Activated CD8-positive, alpha-beta T cell treated with anti-CD3 and anti-CD28 coated beads, Interleukin-2, amount 10 ng/mL, durations not matched to agents 7 days and 5 days (primary cell): ENCODE measurements at regions of chr19 and their contacts with region 1.

Region 1: GRCh38 chr19:11924886-11925650 is at the start of gene ZNF700:
- DNase-seq: peak; percentile 97
- ATAC-seq: peak; percentile 91
- H3K4me3 Mint-ChIP-seq: peak within 1 kb of the TSS; percentile 94
- H3K27ac Mint-ChIP-seq: peak within 1 kb of the TSS; percentile 97
- H3K4me1 Mint-ChIP-seq: peaks cover 38% of the 10 kb centered on the region
- H3K27me3 Mint-ChIP-seq: no peaks in the 10 kb centered on the region
- total RNA-seq, gene ZNF700: 22.7 to 25.7 TPM

Region 2: GRCh38 chr19:11881151-11881800 is 43.8 kb before region 1 on chr19:
- CTCF ChIA-PET with region 1: interaction called, 49 read pairs
- POLR2A ChIA-PET with region 1: interaction called, 17 read pairs
- DNase-seq: peak; percentile 77
- ATAC-seq: peak; percentile 82
- H3K4me3 Mint-ChIP-seq: no peak overlapping the region
- H3K27ac Mint-ChIP-seq: no peak overlapping the region
- H3K4me1 Mint-ChIP-seq: no peaks in the 10 kb centered on the region
- H3K27me3 Mint-ChIP-seq: peaks cover 6% of the 10 kb centered on the region

Region 3: GRCh38 chr19:11949201-11949600 is 24.1 kb after region 1 on chr19:
- CTCF ChIA-PET with region 1: interaction called, 10 read pairs
- POLR2A ChIA-PET with region 1: interaction called, 4 read pairs
- DNase-seq: no peak
- ATAC-seq: no peak
- H3K4me3 Mint-ChIP-seq: no peak overlapping the region
- H3K27ac Mint-ChIP-seq: peak overlapping the region; percentile 1
- H3K4me1 Mint-ChIP-seq: no peaks in the 10 kb centered on the region
- H3K27me3 Mint-ChIP-seq: no peaks in the 10 kb centered on the region

Region 4: DNA sequence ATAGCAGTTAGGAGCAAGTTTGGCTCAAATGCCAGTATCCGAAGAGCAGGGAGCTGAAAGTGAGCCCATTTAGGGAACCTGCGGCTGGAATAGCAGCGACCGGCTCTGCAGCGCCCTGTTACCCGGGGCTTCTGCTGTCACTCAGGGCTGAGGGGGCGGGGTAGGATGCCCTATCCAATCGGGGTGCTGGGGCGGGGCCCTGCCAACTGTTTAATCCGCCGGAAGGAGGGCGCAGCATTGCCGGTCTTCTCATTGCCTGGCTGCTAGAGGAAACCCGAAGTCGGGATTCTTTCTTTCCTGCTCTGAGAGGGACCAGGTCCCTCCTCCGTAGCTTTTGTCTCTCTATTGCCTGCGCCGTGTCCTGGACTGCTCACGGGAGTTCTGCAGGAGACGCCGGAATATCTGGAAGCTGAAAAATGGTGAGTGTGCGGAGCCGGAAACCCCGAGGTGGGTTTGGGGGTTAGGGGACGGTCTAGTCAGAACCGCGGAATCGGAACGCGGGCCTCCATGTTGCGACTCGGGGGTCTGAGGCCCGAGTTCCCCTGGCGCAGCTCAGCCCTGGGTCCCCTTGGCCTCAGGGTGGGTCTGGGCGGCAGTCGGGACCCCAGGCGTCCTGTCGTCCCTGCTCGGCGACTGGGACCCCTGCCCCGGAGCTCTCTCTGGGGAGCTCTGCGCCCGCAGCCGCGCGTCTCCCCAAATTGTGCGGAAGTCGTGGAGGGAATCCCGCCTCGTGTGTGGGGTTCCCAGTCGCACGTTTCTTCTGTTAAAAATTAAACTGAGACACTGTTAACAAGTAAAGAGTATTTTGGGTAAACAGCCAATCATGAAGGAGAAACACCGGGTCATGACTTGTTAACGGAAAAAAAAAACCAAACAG is 62.6 kb after region 1 on chr19:
- CTCF ChIA-PET with region 1: interaction called, 115 read pairs
- POLR2A ChIA-PET with region 1: interaction called, 53 read pairs
- DNase-seq: peak; percentile 97
- ATAC-seq: peak; percentile 96
- H3K4me3 Mint-ChIP-seq: peak overlapping the region; percentile 99
- H3K27ac Mint-ChIP-seq: peak overlapping the region; percentile 98
- H3K4me1 Mint-ChIP-seq: peaks cover 27% of the 10 kb centered on the region
- H3K27me3 Mint-ChIP-seq: no peaks in the 10 kb centered on the region

Region 5: DNA sequence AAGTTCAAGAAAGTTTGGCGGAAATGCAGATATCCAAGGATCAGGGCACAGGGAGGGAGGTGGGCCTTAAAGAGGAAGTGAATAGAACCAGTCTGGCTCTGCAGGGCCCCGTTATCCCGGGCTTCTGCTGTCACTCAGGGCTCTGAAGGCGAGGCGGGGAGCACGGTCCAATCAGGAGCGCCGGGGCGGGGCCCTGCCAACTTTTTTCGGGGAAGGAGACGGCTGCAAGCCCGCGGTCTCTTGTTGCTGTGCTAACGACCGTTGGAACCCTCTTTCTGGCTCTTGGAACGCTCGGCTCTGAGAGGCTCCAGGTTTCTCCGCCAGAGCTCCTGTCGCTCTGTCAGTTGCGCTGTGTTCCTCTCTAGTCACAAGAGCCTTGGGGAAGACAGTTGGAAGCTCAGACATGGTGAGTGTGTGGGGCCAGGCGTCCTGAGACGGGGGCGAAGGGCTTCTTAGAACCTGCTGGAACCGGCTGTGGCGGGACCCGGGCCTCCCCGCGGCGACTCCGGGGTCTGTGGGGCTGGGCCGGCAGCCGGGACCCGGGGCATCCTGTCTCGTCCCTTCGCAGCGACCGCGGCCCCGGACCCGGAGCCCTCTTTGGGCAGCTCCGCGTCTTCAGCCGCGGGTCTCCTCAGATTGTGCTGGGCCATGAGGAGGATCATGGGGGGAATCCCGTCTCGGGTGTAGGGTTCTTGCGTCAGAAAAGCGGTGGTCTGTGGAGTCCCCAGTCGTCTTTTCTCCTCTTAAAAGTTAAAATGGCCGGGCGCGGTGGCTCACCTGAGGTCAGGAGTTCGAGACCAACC is 167.2 kb after region 1 on chr19:
- CTCF ChIA-PET with region 1: interaction called, 25 read pairs
- POLR2A ChIA-PET with region 1: interaction called, 6 read pairs
- DNase-seq: peak; percentile 84
- ATAC-seq: peak; percentile 94
- H3K4me3 Mint-ChIP-seq: peak overlapping the region; percentile 84
- H3K27ac Mint-ChIP-seq: peak overlapping the region; percentile 88
- H3K4me1 Mint-ChIP-seq: peaks cover 17% of the 10 kb centered on the region
- H3K27me3 Mint-ChIP-seq: no peaks in the 10 kb centered on the region